HepG2 (cell line): ENCODE measurements at regions of chr2 and their contacts with region 1.

Region 1: DNA sequence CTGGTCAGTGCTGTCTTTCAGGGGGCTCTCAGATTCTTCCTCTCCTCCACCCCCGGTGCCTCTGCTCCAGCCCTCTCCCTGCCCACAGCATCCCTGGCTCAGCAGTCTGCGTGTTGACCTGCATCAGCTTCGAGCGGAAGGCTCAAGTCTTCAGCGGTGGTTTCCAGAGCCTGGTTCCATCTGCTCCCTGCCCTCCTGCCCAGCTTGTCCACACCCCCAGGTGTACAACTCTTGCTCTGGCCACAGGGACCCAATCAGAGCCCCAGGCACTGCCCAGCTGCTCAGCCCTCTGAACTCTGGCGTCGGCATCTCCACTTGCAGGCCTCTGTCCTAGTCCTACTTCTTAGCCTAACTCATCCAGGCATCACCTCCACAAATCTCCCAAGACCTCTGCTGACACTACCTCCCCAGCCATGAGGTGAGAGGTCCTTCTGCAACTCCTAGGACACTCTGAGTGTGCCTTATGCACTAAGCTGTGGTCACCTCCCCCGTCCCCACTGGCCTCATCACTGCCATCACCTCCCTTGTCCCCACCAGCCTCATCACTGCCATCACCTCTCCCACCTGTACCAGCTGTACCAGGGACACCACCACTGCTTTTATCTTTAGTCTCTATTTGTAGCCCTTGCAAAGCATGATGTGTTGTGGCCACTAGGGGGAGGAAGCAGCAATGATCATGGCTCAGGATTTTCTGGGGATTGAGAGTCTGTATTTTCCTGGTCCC is 60.9 kb downstream of the EDAR start:
- DNase-seq: peak; percentile 51
- ATAC-seq: peak; percentile 81
- H3K4me3 ChIP-seq: no peak overlapping the region
- H3K27ac ChIP-seq: no peak overlapping the region
- H3K4me1 ChIP-seq: 0 out of 2 replicates have a peak, but pooled peaks cover 3% of the 10 kb centered on the region
- H3K27me3 ChIP-seq: peaks cover 3 to 58% of the 10 kb centered on the region in 2 experiments; a peak in 4 of 5 replicates
- CTCF ChIP-seq: peak; percentile 90
- EP300 ChIP-seq: no peak
- POLR2A ChIP-seq: no peak
- RAD21 ChIP-seq: peak; percentile 62

Region 2: DNA sequence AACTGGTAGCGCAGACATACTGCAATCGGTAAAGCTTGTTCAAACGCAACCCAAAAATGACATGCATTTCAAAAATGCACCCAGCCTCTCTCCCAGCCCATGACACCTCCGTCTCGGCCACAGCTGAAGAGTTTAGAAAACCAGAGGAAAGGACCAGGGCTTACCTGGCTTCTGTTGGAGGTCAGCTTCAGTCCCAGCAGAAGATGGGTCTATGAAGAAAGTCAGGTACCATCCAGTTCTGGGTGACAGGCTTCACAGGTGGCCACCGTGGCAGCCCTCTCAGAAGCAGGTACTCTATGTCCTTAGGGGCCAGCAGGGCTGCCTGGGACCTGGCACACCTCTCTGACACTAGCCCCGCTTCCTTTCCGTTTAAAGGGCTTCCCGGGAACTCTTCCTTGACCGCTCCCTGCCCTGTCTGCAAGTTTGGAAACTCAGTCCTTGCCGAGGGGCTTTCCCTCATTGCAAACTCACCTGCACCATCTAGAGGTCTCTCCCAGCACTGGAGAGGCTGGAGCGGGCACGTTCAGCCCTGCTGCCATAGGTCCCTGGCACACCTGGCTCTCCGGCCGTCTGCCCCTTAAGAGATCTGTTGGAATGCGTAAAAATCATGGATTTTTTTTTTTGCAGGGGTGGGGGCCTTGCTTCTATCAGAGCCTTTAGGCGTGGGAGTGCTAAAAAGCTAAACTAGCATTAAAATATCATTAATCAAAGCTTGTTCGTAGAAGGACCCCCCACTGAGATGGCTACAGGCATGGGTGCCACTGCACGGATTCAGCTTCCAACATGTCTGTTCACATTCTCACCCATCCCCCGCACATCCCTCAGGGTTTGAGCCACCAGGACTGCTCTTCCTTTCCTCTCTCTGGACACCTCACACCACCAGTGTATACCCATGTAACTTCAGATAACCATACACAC is 61.0 kb after region 1 on chr2 and contains the start of gene EDAR:
- CTCF ChIA-PET with region 1: interaction called, 12 read pairs
- POLR2A ChIA-PET with region 1: no interaction called
- in situ Hi-C with region 1: loop called (anchors 5 kb)
- intact Hi-C with region 1: loop called (anchors 1 kb)
- DNase-seq: peak; percentile 54
- ATAC-seq: peak; percentile 93
- H3K4me3 ChIP-seq: peak within 1 kb of the TSS in 1 of 3 experiments; percentile 53; a peak in 2 of 6 replicates
- H3K27ac ChIP-seq: no peak within 1 kb of the TSS
- H3K4me1 ChIP-seq: peaks cover 33% of the 10 kb centered on the region
- H3K27me3 ChIP-seq: peaks cover 7 to 36% of the 10 kb centered on the region in 2 experiments; a peak in 2 of 5 replicates
- CTCF ChIP-seq: peak; percentile 92
- EP300 ChIP-seq: no peak
- POLR2A ChIP-seq: no peak
- RAD21 ChIP-seq: peak; percentile 74
- total RNA-seq, gene EDAR: not detected in 2 replicates